ENCODE measurements at regions of chr11 and their contacts with region 1.

Region 1: DNA sequence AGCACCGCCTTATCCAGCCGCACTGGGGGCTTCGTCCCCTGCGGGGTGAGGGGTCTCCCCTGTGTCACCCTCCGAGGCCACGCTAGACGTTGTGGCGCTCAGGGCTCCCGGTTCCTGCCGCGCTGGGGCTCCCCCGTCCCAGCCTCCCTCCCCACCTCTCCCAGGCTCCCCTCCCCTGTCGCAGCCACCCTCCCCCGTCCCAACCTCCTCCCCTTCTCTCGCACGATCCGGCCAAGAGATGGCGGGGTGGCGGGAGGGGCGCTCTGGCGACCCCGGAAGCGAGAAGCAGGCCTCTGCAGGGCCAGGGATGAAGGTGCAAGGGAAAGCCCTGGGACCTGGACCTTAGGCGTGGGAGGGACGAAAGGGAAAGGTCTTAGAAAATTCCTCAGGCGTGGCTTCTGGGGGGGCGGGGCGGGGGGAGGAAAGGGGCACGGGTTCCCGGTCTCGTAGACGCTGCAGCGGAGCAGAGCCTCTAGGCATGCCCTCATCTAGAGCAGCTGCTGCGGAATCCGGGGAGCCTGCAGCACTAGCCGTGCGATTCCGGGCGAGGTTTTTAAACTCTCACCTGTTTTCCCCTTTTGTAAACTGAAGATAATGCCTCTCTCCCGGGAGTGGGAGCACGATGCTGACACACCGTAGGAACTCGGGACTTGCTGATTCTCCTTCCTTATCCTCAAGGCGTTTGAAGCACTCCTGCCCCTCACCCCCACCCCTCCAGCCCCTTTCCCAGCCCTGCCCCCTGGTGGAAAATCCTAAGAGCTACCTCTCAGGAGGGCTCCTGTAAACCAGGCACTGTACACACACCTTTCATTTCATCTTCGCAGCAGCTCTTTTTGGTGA is 14.4 kb downstream of the KCNJ5 start:
- DNase-seq: no peak
- H3K4me3 Mint-ChIP-seq: peak overlapping the region; percentile 68
- H3K27ac Mint-ChIP-seq: no peak overlapping the region
- H3K4me1 Mint-ChIP-seq: peaks cover 5% of the 10 kb centered on the region
- H3K27me3 Mint-ChIP-seq: peaks cover 74% of the 10 kb centered on the region

Region 2: DNA sequence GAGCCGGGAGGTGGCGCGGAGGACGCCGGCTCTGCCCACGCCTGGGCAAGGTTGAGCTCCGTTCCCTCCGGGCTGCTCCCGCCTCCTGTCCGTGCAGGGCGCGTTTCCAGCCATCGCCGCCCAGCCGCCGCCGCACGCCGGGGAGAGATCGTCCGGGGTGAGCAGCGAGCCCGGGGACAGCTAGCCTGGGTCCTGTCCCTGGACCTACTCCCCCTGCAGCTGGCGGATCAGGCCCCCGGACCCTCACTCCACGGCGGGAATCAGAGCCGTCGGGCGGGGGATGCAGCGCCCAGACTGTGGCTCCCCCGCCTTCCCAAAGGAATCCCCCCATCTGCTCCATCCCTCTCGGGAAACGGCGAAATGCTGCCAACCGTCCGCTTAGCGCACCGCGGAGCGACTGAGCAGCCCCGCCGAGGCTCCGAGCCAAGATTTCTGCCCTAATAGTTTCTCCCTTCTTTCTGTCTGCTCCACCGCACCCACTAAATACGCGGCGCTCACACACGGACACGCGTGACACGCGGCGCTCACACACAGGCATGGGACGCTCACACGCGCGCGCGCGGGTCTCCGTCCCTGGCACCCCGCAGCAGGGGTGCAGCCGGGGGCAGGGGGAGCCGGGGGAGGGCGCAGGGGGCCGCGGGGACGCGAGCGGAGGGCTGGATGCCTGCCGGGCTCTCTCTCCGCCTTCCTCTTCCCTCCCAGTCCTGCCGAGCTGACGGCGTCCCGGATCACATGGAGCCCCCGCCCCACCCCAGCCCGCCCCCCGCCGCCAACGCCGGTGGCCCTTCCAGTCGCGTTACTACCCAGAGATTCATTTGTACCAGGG is 14.8 kb before region 1 on chr11 and contains the start of gene KCNJ5:
- intact Hi-C with region 1: loop called (anchors 2 kb)
- DNase-seq: no peak
- H3K4me3 Mint-ChIP-seq: peak within 1 kb of the TSS; percentile 31
- H3K27ac Mint-ChIP-seq: no peak within 1 kb of the TSS
- H3K4me1 Mint-ChIP-seq: peaks cover 7% of the 10 kb centered on the region
- H3K27me3 Mint-ChIP-seq: peaks cover 66% of the 10 kb centered on the region
- total RNA-seq, gene KCNJ5: not detected in 2 replicates

Measured in activated T-helper 2 cell treated with anti-CD3 and anti-CD28 coated beads, Interferon-gamma antibody, Interleukin-2, Interleukin-4, amounts not matched to agents 10 μg/mL and 5 μg/mL and 100 μg/mL, durations not matched to agents 14 hours and 24 hours and 36 hours (primary cell).